Natural killer cell (primary cell): ENCODE measurements at regions of chr21 and their contacts with region 1.

Region 1: GRCh38 chr21:45074818-45075595 is 627 bp downstream of the ADARB1 start:
- DNase-seq: peak in 1 of 2 donors; percentile 51
- ATAC-seq: no peak
- H3K4me3 ChIP-seq: peak overlapping the region; percentile 49
- H3K4me3 Mint-ChIP-seq: peak overlapping the region; percentile 84
- H3K27ac ChIP-seq: no peak overlapping the region
- H3K27ac Mint-ChIP-seq: peak overlapping the region in 1 of 2 donors; percentile 45
- H3K4me1 ChIP-seq: peaks cover 47% of the 10 kb centered on the region
- H3K4me1 Mint-ChIP-seq: peaks cover 42 to 51% of the 10 kb centered on the region in 2 donors
- H3K27me3 ChIP-seq: no peaks in the 10 kb centered on the region
- H3K27me3 Mint-ChIP-seq: peaks cover 5 to 6% of the 10 kb centered on the region in 2 donors
- CTCF ChIP-seq: no peak

Region 2: DNA sequence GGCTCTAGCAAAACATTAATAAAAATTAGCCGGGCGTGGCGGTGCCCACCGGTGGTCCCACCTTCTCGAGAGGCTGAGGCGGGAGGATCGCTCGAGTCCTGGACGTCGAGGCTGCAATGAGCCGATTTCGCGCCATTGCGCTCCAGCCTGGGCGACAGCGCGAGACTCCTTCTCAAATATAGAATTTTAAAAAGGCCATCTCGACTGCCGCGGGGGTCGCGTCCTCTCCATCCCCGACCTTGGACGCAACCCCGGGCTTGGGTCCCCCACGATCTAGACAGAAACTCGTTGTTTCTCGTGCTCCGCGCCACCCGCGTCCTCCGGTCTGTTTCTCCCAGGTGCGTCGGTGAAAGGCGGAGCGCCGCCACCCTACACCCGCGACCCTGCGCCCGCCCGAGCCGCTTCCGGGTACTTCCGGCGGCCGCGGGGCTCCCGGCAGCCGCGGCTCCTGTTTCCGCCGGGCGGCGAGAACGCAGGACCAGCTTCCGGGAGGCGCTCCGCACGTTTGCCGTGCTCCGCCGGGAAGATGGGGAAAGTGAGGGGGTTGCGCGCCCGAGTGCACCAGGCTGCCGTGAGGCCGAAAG is 135.4 kb before region 1 on chr21 and contains the start of gene SLX9:
- intact Hi-C with region 1: no loop called
- DNase-seq: peak; percentile 71 to 89
- ATAC-seq: peak; percentile 90 to 96 (median 93)
- H3K4me3 ChIP-seq: peak within 1 kb of the TSS; percentile 78
- H3K4me3 Mint-ChIP-seq: peak within 1 kb of the TSS; percentile 93
- H3K27ac ChIP-seq: peak within 1 kb of the TSS; percentile 20
- H3K27ac Mint-ChIP-seq: peak within 1 kb of the TSS; percentile 61 to 66
- H3K4me1 ChIP-seq: peaks cover 32% of the 10 kb centered on the region
- H3K4me1 Mint-ChIP-seq: peaks cover 21 to 33% of the 10 kb centered on the region in 2 donors
- H3K27me3 ChIP-seq: no peaks in the 10 kb centered on the region
- H3K27me3 Mint-ChIP-seq: no peaks in the 10 kb centered on the region
- CTCF ChIP-seq: no peak
- total RNA-seq, gene SLX9: 12.8 to 22.9 (median 20.0) TPM

Region 3: GRCh38 chr21:45011911-45012660 is 62.9 kb before region 1 on chr21:
- intact Hi-C with region 1: no loop called
- DNase-seq: no peak
- ATAC-seq: no peak
- H3K4me3 ChIP-seq: no peak overlapping the region
- H3K4me3 Mint-ChIP-seq: no peak overlapping the region
- H3K27ac ChIP-seq: no peak overlapping the region
- H3K27ac Mint-ChIP-seq: no peak overlapping the region
- H3K4me1 ChIP-seq: no peaks in the 10 kb centered on the region
- H3K4me1 Mint-ChIP-seq: peaks cover 0 to 5% of the 10 kb centered on the region in 2 donors
- H3K27me3 ChIP-seq: no peaks in the 10 kb centered on the region
- H3K27me3 Mint-ChIP-seq: peaks cover 38 to 56% of the 10 kb centered on the region in 2 donors
- CTCF ChIP-seq: no peak

Region 4: DNA sequence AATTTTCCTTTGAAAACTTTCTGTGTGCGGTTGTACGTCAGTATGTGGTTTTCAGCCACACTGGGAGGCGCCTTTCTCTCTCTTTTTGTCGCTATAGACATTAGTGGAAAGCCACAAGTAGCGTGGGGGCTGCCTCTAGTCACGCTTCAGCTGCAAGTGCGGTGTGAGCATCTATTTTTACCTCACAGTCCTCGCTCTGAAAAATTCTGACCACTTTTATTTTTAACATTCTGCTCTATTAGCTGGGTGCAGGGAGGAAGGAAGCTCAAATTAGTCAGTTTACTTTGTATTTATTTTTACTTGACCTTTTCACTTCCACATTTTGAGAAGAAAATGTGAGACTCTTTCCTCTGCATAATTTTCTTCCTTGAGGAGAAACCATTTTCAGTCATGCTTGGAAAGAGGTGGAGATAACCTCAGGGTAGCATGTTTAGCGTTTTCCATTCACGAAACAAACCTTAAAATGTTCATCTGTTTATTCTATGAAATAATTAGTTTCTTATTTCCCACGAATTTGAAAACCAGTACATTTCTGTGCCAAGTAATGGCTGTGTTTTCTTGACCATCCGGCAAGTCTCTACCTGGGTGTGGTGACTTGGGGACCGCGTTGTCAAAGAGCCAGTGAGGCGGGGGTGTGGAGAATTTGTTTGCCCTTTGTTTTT is 35.0 kb after region 1 on chr21:
- intact Hi-C with region 1: loop called (anchors 2 kb)
- DNase-seq: peak; percentile 37 to 66
- ATAC-seq: peak; percentile 60 to 89 (median 80)
- H3K4me3 ChIP-seq: peak overlapping the region; percentile 18
- H3K4me3 Mint-ChIP-seq: peak overlapping the region; percentile 85
- H3K27ac ChIP-seq: peak overlapping the region; percentile 78
- H3K27ac Mint-ChIP-seq: peak overlapping the region; percentile 47 to 68
- H3K4me1 ChIP-seq: peaks cover 31% of the 10 kb centered on the region
- H3K4me1 Mint-ChIP-seq: peaks cover 32 to 46% of the 10 kb centered on the region in 2 donors
- H3K27me3 ChIP-seq: no peaks in the 10 kb centered on the region
- H3K27me3 Mint-ChIP-seq: peaks cover 0 to 9% of the 10 kb centered on the region in 2 donors
- CTCF ChIP-seq: no peak